AG04450 (cell line): ENCODE measurements at regions of chr1 and their contacts with region 1.

Region 1: DNA sequence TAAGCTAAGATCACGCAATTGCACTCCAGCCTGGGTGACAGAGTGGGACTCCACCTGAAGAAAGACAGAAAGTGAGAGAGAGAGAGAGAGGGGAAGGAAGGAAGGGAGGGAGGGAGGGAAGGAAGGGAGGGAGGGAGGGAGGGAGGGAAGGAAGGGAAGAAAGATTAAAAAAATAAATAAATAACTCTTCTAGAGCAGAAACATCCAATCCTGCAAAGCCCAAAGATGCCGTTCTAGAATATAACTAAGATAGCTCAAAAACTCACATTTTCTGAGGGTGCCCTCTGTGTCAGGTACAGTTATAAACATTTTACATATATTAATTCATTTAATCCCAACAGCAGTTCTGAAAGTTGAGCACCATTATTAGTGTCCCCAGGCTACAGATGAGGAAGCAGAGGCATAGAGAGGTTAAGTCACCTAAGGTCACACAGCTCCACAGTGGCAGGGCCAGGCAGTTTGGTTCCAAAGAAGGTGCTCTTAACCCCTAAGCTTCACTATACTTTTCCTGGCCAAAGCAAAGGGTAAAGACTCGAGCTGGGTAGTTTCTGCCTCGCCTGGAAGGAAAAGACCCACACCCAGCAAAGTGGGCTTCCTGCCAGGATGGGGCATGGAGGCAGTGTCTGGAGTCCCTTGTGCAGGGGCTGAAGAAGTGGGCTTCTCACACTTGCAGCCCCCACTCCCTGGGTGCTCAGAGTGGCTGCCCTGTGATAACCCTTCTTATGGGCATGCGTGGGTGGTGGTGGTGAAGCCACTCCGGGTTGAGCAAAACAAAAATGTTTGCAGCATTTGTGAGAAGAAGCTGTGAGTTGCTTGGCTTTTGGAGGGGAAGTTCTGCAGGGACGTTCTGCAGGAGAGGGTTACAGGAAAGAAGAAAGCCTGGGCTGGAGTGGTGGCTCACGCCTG is 7.9 kb upstream of the PIK3CD start:
- DNase-seq: no peak
- H3K4me3 ChIP-seq: no peak overlapping the region
- H3K27ac ChIP-seq: no peak overlapping the region
- H3K27me3 ChIP-seq: peaks cover 10% of the 10 kb centered on the region
- CTCF ChIP-seq: no peak

Region 2: DNA sequence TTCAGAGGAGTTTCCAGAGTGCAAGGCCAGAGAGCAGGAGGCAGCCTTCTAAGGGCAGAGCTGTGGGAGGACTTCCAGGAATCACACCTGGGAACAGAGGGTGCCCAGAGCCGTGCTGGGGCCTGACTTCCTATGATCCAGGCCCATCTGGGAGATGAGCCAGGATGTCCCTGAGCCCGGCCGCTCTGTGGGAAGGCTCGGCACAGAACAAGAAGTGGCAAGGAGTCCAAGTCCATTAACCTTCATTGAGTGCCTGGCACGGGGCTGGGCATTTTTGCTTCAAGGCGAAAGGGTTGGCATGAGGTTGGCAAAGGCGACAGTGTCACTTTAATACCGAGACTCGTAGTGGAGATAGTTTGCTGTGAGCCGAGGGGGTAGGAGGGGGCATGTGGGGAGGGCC is 36.7 kb before region 1 on chr1:
- CTCF ChIA-PET with region 1: no interaction called
- POLR2A ChIA-PET with region 1: no interaction called
- DNase-seq: no peak
- H3K4me3 ChIP-seq: no peak overlapping the region
- H3K27ac ChIP-seq: no peak overlapping the region
- H3K27me3 ChIP-seq: no peaks in the 10 kb centered on the region
- CTCF ChIP-seq: no peak

Region 3: DNA sequence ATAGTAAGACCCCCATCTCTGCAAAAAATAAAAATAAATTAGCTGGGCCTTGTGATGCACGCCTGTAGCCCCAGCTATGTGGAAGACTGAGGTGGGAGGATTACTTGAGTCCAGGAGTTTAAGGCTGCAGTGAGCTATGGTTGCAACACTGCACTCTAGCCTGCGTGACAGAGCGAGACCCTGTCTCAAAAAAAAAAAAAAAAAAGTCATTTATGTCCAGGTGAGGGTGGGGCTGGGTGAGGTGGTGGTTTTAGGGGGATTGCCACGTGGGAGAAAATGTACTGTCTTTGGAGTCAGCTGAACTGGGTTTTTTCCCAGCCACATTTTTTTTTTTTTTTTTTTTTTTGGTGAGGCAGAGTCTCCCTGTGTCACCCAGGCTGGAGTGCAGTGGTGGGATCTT is 14.6 kb after region 1 on chr1:
- CTCF ChIA-PET with region 1: no interaction called
- POLR2A ChIA-PET with region 1: interaction called, 18 read pairs
- DNase-seq: no peak
- H3K4me3 ChIP-seq: no peak overlapping the region
- H3K27ac ChIP-seq: no peak overlapping the region
- H3K27me3 ChIP-seq: peaks cover 9% of the 10 kb centered on the region
- CTCF ChIP-seq: no peak